Mammary epithelial cell (primary cell): ENCODE measurements at regions of chr3 and their contacts with region 1.

Region 1: DNA sequence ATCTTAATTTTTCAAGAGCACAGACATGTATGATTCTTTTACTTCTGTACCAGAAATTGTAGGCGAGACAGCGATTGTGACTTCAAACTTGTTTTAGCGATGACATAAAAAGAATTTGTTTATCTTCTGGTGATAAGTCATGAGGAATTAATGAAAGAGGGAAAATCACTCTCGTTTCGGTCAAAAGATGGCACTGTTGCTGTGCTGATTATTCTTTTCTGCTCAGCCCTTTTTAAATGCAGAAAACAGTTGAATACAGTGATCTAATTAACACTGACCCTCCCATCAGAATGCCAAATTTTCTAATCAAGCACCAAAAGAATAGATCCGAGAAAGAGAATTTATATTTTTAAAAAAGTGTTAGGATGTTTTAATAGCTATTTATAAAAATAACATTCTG is 52.6 kb downstream of the NSUN3 start:
- DNase-seq: peak; percentile 13
- H3K4me3 ChIP-seq: no peak overlapping the region
- H3K27ac ChIP-seq: no peak overlapping the region
- H3K4me1 ChIP-seq: no peaks in the 10 kb centered on the region
- H3K27me3 ChIP-seq: no peaks in the 10 kb centered on the region
- CTCF ChIP-seq: peak; percentile 29 to 49

Region 2: DNA sequence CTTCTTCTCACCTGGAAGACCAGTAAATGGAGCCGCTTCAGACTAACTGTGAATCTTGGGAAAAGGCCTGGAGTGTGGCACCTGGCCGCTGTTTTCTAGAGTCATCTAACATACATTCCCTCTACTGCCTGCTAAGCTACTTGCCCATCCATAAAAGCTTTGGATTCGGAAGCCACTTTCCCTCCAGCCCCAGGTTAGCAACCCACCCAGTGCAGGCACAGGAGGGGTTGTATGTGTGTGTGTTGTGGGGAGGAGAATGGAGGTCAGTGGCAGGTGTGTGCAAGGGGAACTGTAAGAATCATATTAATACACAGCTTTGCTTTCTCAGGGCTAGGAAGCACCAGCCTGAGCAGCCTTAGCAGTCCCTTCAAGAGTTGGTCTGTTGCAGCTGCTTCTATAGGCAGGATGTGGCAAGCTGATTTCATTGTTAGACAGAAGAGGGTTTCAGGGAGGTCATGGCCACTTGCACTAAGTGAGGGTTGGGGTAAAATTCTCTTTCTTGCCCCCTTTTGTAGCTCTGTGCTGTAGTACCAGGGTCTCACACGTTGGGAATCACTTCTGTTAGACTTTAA is 43.7 kb before region 1 on chr3:
- CTCF ChIA-PET with region 1: no interaction called
- dilution Hi-C with region 1: no loop called
- in situ Hi-C with region 1: no loop called
- intact Hi-C with region 1: no loop called
- DNase-seq: no peak
- H3K4me3 ChIP-seq: no peak overlapping the region
- H3K27ac ChIP-seq: no peak overlapping the region
- H3K4me1 ChIP-seq: no peaks in the 10 kb centered on the region
- H3K27me3 ChIP-seq: no peaks in the 10 kb centered on the region
- CTCF ChIP-seq: no peak

Region 3: GRCh38 chr3:94101851-94102250 is 13.6 kb before region 1 on chr3:
- CTCF ChIA-PET with region 1: no interaction called
- dilution Hi-C with region 1: no loop called
- in situ Hi-C with region 1: no loop called
- intact Hi-C with region 1: no loop called
- DNase-seq: no peak
- H3K4me3 ChIP-seq: no peak overlapping the region
- H3K27ac ChIP-seq: no peak overlapping the region
- H3K4me1 ChIP-seq: no peaks in the 10 kb centered on the region
- H3K27me3 ChIP-seq: no peaks in the 10 kb centered on the region
- CTCF ChIP-seq: peak; percentile 12 to 13

Region 4: GRCh38 chr3:94234177-94234788 is 118.8 kb after region 1 on chr3:
- CTCF ChIA-PET with region 1: interaction called, 25 read pairs
- dilution Hi-C with region 1: no loop called
- in situ Hi-C with region 1: no loop called
- intact Hi-C with region 1: loop called (anchors 2 kb)
- DNase-seq: peak; percentile 42
- H3K4me3 ChIP-seq: no peak overlapping the region
- H3K27ac ChIP-seq: no peak overlapping the region
- H3K4me1 ChIP-seq: no peaks in the 10 kb centered on the region
- H3K27me3 ChIP-seq: no peaks in the 10 kb centered on the region
- CTCF ChIP-seq: peak; percentile 65 to 76

Region 5: DNA sequence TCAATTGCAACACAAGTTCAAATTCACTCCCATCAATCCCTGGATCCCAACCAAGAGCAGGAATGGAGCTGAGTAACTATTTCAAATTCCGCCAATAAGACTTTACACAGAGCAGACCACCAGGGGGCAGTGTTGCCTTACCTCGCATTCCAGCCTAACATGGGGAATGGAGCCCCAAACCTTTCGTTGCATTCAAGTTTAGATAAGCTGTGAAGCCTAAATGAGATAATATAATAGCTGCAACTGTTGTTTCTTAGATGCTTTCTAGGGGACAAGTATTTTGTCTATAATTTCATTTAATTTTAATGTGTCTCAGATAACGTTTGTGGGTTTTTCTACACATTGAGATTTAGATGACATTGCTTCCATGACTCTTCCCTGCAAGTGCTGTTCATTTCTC is 134.1 kb after region 1 on chr3:
- CTCF ChIA-PET with region 1: no interaction called
- dilution Hi-C with region 1: no loop called
- in situ Hi-C with region 1: no loop called
- intact Hi-C with region 1: loop called (anchors 1 kb)
- DNase-seq: peak; percentile 47
- H3K4me3 ChIP-seq: no peak overlapping the region
- H3K27ac ChIP-seq: no peak overlapping the region
- H3K4me1 ChIP-seq: no peaks in the 10 kb centered on the region
- H3K27me3 ChIP-seq: peaks cover 2% of the 10 kb centered on the region
- CTCF ChIP-seq: peak; percentile 85 to 89

Region 6: GRCh38 chr3:94285870-94286269 is 170.4 kb after region 1 on chr3:
- CTCF ChIA-PET with region 1: no interaction called
- dilution Hi-C with region 1: no loop called
- in situ Hi-C with region 1: loop called in 1 of 2 experiments (anchors 25 kb)
- intact Hi-C with region 1: loop called (anchors 10 kb)
- DNase-seq: peak; percentile 5
- H3K4me3 ChIP-seq: no peak overlapping the region
- H3K27ac ChIP-seq: no peak overlapping the region
- H3K4me1 ChIP-seq: no peaks in the 10 kb centered on the region
- H3K27me3 ChIP-seq: no peaks in the 10 kb centered on the region
- CTCF ChIP-seq: peak; percentile 14 to 39

Region 7: GRCh38 chr3:94336046-94336710 is 220.7 kb after region 1 on chr3:
- CTCF ChIA-PET with region 1: no interaction called
- dilution Hi-C with region 1: no loop called
- in situ Hi-C with region 1: no loop called
- intact Hi-C with region 1: loop called (anchors 5 kb)
- DNase-seq: peak; percentile 40
- H3K4me3 ChIP-seq: no peak overlapping the region
- H3K27ac ChIP-seq: no peak overlapping the region
- H3K4me1 ChIP-seq: no peaks in the 10 kb centered on the region
- H3K27me3 ChIP-seq: no peaks in the 10 kb centered on the region
- CTCF ChIP-seq: peak; percentile 53 to 63

Region 8: DNA sequence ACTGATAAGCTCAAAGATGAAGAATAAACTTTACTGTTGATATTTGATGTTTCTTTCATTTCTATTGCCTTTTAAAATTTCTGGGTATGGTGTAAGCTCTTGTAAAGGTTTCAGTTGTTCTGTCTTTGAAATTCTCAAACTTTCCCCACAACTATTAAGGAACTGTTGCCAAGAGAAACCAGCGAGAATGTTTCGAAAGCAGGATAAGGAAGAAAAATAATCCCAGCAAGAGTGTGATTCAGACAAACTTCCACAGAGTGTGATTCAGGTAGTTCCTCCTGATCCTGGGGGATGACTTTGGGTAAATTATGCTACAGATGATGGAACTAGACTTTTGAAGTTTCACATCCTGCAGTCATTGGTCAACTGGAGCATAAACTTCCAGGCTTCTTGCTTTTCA is 579.4 kb after region 1 on chr3:
- CTCF ChIA-PET with region 1: no interaction called
- dilution Hi-C with region 1: no loop called
- in situ Hi-C with region 1: no loop called
- intact Hi-C with region 1: no loop called
- DNase-seq: peak; percentile 1
- H3K4me3 ChIP-seq: no peak overlapping the region
- H3K27ac ChIP-seq: no peak overlapping the region
- H3K4me1 ChIP-seq: no peaks in the 10 kb centered on the region
- H3K27me3 ChIP-seq: no peaks in the 10 kb centered on the region
- CTCF ChIP-seq: no peak